ENCODE measurements at regions of chr22 and their contacts with region 1.

Region 1: DNA sequence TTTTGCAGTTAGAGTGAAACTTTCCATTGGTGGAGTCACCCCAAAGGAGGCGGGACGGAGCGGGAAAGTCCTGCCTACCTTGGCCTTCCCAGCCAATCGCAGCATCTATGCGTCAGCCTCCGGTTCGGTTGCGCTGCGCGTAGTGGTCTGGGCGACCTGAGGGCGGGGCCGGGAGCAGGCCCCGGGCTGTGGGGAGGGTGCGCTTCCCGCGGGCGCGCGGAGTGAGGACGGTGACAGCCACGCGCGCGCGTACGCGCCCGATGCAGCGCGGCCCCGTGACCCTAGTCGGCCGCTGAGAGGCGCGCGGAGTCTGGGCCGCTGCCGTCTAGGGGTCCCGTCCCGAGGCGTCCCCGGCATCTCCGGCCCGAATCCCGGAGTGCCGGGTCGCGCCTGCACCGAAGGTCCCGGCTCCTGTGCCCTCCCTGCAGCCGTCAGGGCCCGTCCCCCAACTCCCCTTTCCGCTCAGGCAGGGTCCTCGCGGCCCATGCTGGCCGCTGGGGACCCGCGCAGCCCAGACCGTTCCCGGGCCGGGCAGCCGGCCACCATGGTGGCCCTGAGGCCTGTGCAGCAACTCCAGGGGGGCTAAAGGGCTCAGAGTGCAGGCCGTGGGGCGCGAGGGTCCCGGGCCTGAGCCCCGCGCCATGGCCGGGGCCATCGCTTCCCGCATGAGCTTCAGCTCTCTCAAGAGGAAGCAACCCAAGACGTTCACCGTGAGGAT is at the start of gene NF2:
- DNase-seq: peak; percentile 49 to 99 (median 99)
- ATAC-seq: peak; percentile 99 to 100 (median 100)
- H3K4me3 ChIP-seq: peak within 1 kb of the TSS; percentile 67 to 98 (median 85)
- H3K27ac ChIP-seq: peak within 1 kb of the TSS; percentile 78 to 99 (median 94)
- H3K4me1 ChIP-seq: peaks cover 0 to 23% (median 15%) of the 10 kb centered on the region in 12 donors
- H3K27me3 ChIP-seq: no peaks in the 10 kb centered on the region
- CTCF ChIP-seq: peak in 2 of 12 donors; percentile 19 to 23
- POLR2A ChIP-seq: peak in 1 of 2 donors; percentile 83
- total RNA-seq, gene NF2: 41.2 to 137 (median 52.1) TPM

Region 2: DNA sequence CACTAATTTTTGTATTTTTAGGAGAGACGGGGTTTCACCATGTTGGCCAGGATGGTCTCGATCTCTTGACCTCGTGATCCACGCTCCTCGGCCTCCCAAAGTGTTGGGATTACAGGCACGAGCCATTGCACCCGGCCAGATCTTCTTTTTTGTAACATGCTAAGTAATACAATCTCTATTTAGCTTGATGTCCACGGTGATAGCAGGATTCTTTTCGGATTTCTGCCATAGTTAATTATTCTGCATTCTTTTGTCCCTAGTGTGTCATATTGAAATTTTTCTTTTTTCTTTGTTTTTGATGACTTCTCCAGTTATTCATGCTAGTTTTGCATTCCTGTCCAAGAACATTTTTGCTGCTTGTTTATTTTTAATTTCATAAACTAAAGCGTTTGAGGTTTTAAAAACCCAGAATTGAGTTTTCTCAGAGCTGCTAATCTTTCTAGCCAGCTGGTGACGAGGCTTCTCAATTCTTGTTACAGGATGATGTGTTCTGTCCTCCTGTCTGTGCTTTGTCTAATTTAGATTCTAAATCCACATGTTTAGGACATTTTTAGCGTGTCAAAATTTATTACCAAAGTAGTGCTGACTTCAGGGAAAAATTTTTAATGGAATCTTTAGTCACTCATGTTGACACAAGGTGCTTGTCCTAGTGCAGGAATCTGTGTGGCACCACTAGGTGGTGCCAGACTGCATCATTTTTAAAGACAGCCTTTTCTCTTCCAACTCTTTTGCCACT is 21.7 kb after region 1 on chr22:
- intact Hi-C with region 1: loop called in 1 of 10 experiments (anchors 1 kb)
- DNase-seq: peak in 1 of 5 donors; percentile 42
- ATAC-seq: peak in 2 of 4 donors; percentile 49 to 63
- H3K4me3 ChIP-seq: no peak overlapping the region
- H3K27ac ChIP-seq: peak overlapping the region in 1 of 12 donors; percentile 13
- H3K4me1 ChIP-seq: peaks cover 0 to 61% (median 26%) of the 10 kb centered on the region in 12 donors
- H3K27me3 ChIP-seq: no peaks in the 10 kb centered on the region
- CTCF ChIP-seq: peak; percentile 65 to 91 (median 82)
- POLR2A ChIP-seq: no peak